Activated CD4-positive, alpha-beta memory T cell treated with anti-CD3 and anti-CD28 coated beads, Interleukin-2, amount 10 ng/mL, durations not matched to agents 7 days and 5 days (primary cell): ENCODE measurements at regions of chr6 and their contacts with region 1.

Region 1: DNA sequence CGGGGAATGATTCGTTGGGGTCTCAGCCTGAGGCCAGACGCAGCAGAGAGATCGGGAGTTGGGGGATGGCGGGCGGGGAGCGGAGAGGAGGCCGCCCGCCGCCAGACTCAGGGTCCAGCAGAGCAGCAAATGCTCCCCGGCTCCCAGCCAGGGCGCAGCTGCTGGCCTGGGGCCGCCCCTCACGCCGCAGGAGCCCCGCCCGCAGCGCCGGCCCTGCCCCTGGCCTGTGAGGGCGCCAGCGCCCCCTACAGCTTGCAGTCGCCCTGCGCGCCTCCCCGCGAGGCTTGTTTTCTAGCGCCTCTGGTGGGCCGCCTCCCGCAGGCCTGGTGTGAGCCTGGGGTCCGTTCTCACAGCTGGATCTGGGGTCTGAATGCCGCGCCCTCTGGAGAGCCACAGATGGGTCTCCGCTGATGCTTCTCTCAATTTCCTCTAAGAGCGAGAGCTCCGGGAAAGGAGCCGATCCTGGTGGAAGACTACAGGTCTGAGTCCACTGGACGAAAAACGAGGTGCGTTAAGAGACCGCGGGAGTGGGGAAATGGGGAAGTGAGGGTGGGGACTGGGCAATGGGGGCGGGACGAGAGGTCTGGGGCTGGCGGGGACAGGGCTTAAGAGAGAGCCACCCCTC is 29.9 kb downstream of the TRIM38 start:
- DNase-seq: peak; percentile 94
- H3K4me3 Mint-ChIP-seq: peak overlapping the region; percentile 97
- H3K27ac Mint-ChIP-seq: peak overlapping the region; percentile 78
- H3K4me1 Mint-ChIP-seq: peaks cover 30% of the 10 kb centered on the region
- H3K27me3 Mint-ChIP-seq: no peaks in the 10 kb centered on the region

Region 2: GRCh38 chr6:25927756-25928216 is 64.7 kb before region 1 on chr6:
- CTCF ChIA-PET with region 1: no interaction called
- POLR2A ChIA-PET with region 1: no interaction called
- DNase-seq: no peak
- H3K4me3 Mint-ChIP-seq: no peak overlapping the region
- H3K27ac Mint-ChIP-seq: no peak overlapping the region
- H3K4me1 Mint-ChIP-seq: peaks cover 6% of the 10 kb centered on the region
- H3K27me3 Mint-ChIP-seq: no peaks in the 10 kb centered on the region

Region 3: GRCh38 chr6:25939593-25939992 is 52.9 kb before region 1 on chr6:
- CTCF ChIA-PET with region 1: interaction called, 10 read pairs
- POLR2A ChIA-PET with region 1: no interaction called
- DNase-seq: no peak
- H3K4me3 Mint-ChIP-seq: no peak overlapping the region
- H3K27ac Mint-ChIP-seq: no peak overlapping the region
- H3K4me1 Mint-ChIP-seq: peaks cover 6% of the 10 kb centered on the region
- H3K27me3 Mint-ChIP-seq: no peaks in the 10 kb centered on the region

Region 4: GRCh38 chr6:25971187-25971811 is 21.2 kb before region 1 on chr6:
- CTCF ChIA-PET with region 1: interaction called, 20 read pairs
- POLR2A ChIA-PET with region 1: interaction called, 18 read pairs
- DNase-seq: no peak
- H3K4me3 Mint-ChIP-seq: no peak overlapping the region
- H3K27ac Mint-ChIP-seq: no peak overlapping the region
- H3K4me1 Mint-ChIP-seq: peaks cover 72% of the 10 kb centered on the region
- H3K27me3 Mint-ChIP-seq: no peaks in the 10 kb centered on the region

Region 5: GRCh38 chr6:26003102-26003694 is 10.7 kb after region 1 on chr6:
- CTCF ChIA-PET with region 1: interaction called, 114 read pairs
- POLR2A ChIA-PET with region 1: interaction called, 7 read pairs
- DNase-seq: peak; percentile 44
- H3K4me3 Mint-ChIP-seq: no peak overlapping the region
- H3K27ac Mint-ChIP-seq: no peak overlapping the region
- H3K4me1 Mint-ChIP-seq: peaks cover 5% of the 10 kb centered on the region
- H3K27me3 Mint-ChIP-seq: no peaks in the 10 kb centered on the region

Region 6: DNA sequence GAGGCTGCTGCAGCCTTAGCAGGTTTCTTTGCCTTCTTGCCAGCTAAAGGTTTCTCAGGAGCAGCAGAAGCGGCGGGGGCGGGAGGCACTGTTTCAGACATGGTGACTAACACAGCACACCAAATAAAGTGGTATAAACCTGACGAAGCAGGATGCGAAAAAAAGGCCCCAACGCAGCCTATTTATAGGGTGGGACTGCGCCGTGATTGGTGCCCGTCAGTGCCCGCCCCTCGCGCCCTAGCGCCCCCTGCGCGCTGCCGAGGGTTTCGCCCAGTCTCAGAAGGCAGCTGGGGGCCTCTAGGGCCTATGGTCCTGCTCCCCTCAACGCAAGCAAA is 25.1 kb after region 1 on chr6:
- CTCF ChIA-PET with region 1: interaction called, 44 read pairs
- POLR2A ChIA-PET with region 1: interaction called, 56 read pairs
- DNase-seq: peak; percentile 86
- H3K4me3 Mint-ChIP-seq: peak overlapping the region; percentile 74
- H3K27ac Mint-ChIP-seq: peak overlapping the region; percentile 96
- H3K4me1 Mint-ChIP-seq: peaks cover 39% of the 10 kb centered on the region
- H3K27me3 Mint-ChIP-seq: no peaks in the 10 kb centered on the region

Region 7: GRCh38 chr6:26249957-26250697 is 257.6 kb after region 1 on chr6:
- CTCF ChIA-PET with region 1: no interaction called
- POLR2A ChIA-PET with region 1: no interaction called
- DNase-seq: peak; percentile 84
- H3K4me3 Mint-ChIP-seq: peak overlapping the region; percentile 90
- H3K27ac Mint-ChIP-seq: peak overlapping the region; percentile 93
- H3K4me1 Mint-ChIP-seq: peaks cover 42% of the 10 kb centered on the region
- H3K27me3 Mint-ChIP-seq: no peaks in the 10 kb centered on the region

Region 8: GRCh38 chr6:26743157-26743821 is 750.8 kb after region 1 on chr6:
- CTCF ChIA-PET with region 1: no interaction called
- POLR2A ChIA-PET with region 1: no interaction called
- DNase-seq: no peak
- H3K4me3 Mint-ChIP-seq: no peak overlapping the region
- H3K27ac Mint-ChIP-seq: no peak overlapping the region
- H3K4me1 Mint-ChIP-seq: no peaks in the 10 kb centered on the region
- H3K27me3 Mint-ChIP-seq: peaks cover 37% of the 10 kb centered on the region